Activated naive CD8-positive, alpha-beta T cell treated with anti-CD3 and anti-CD28 coated beads, Interleukin-2, amount 10 ng/mL, durations not matched to agents 7 days and 5 days (primary cell): ENCODE measurements at regions of chr4 and their contacts with region 1.

Region 1: GRCh38 chr4:26860157-26860921 is at the start of gene STIM2:
- DNase-seq: peak; percentile 100
- ATAC-seq: peak; percentile 74
- H3K4me3 Mint-ChIP-seq: peak within 1 kb of the TSS; percentile 98
- H3K27ac Mint-ChIP-seq: peak within 1 kb of the TSS; percentile 96
- H3K4me1 Mint-ChIP-seq: peaks cover 38% of the 10 kb centered on the region
- H3K27me3 Mint-ChIP-seq: no peaks in the 10 kb centered on the region
- total RNA-seq, gene STIM2: 70.2 to 75.2 TPM

Region 2: DNA sequence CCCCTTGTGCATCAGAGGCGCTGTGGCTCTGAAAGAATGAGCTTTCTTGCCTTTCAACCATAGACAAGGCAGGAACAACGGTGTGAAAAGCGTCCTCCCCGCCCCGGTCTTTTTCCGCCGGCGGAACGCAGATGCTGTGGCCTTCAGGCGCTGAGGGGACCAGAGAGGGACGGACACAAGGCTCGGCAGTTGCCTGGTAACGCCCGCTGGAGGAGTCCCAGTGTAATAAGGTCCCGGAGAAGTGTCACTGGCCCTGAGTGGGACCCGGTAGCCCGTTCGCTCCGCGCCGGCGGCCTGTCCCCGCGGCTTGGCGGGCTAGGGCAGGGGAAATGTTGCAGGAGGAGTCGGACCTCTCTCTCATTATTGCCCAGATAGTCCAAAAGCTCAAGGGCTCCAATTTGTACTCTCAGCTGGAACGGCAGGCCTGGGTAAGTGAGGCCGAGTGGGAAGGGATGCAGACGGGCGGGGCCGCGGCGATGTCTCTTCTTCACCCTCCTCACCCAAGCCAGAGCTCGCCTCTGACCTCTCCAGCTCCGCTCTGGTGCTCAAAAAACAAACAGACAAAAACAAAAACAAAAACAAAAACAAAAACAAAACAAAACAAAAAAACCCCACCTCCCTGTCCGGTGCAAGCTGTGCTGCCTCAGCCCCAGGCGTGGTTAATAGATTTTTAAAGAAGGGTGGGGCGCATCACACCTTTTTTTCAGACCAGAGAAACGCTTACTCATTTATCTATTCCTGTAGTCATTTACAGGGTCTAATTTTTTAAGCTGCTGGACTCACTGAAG is 276.3 kb before region 1 on chr4 and contains the start of gene TBC1D19:
- POLR2A ChIA-PET with region 1: interaction called, 10 read pairs
- DNase-seq: peak; percentile 91
- ATAC-seq: peak; percentile 97
- H3K4me3 Mint-ChIP-seq: peak within 1 kb of the TSS; percentile 90
- H3K27ac Mint-ChIP-seq: peak within 1 kb of the TSS; percentile 93
- H3K4me1 Mint-ChIP-seq: peaks cover 20% of the 10 kb centered on the region
- H3K27me3 Mint-ChIP-seq: no peaks in the 10 kb centered on the region
- total RNA-seq, gene TBC1D19: 6.5 to 7.0 TPM

Region 3: DNA sequence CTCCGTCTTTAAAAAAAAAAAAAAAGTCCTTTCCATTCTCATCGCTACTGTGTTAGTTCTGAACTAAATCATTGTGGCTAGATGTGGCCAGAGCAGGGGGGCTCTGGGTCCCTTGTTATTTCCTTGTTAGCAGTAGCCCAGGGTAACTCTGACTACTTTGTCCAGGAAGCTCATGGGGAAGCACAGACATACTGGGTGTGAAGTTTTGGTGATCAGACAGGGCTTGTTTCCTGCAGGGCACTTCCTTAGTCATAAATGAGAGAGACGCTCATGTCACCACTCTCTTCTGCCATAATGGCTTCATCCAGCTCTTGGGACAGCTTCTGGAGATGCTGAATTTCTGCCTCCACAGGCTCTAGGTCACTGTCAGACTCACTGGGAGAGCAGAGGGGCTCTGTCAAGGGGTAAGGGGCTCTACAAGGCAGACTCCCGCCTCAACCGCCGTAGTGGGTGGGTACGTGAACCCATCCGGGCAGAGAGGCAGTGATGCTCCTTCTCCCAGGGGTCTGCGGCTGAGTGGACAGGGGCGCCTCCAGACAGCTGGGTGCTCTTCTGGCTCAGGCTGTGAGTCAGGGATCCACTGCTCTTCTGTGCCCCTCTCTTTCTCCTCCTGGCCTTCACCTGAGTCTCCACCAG is 13.2 kb after region 1 on chr4:
- POLR2A ChIA-PET with region 1: interaction called, 26 read pairs
- DNase-seq: peak; percentile 47
- ATAC-seq: peak; percentile 90
- H3K4me3 Mint-ChIP-seq: peak overlapping the region; percentile 74
- H3K27ac Mint-ChIP-seq: peak overlapping the region; percentile 91
- H3K4me1 Mint-ChIP-seq: peaks cover 56% of the 10 kb centered on the region
- H3K27me3 Mint-ChIP-seq: no peaks in the 10 kb centered on the region